Activated CD4-positive, alpha-beta T cell treated with anti-CD3 and anti-CD28 coated beads for 36 hours (primary cell): ENCODE measurements at regions of chr20 and their contacts with region 1.

Region 1: GRCh38 chr20:49384437-49385088 is 97.9 kb downstream of the KCNB1 start:
- DNase-seq: peak; percentile 88
- ATAC-seq: peak; percentile 68
- H3K4me3 Mint-ChIP-seq: no peak overlapping the region
- H3K27ac Mint-ChIP-seq: no peak overlapping the region
- H3K4me1 Mint-ChIP-seq: no peaks in the 10 kb centered on the region
- H3K27me3 Mint-ChIP-seq: peaks cover 22% of the 10 kb centered on the region

Region 2: DNA sequence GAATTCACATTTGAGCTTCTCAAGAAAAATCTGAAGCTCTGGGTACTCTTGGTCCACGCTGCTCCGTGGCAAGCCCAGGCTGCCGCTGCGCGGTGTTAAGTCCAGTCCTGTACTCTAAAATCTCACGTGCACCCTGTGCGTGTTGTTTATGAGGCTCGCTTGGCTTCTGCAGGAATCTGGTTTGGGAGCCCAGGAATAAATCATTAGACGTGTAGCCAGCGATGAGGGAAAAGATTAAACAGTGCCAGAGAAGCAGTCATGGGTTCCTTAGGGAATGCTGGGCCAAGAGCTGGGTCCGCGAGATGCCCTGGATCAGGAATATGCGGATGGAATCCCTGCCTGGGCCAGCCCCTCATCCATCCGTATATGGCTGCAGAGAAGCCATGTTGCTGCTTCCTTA is 10.6 kb after region 1 on chr20:
- CTCF ChIA-PET with region 1: interaction called, 22 read pairs
- POLR2A ChIA-PET with region 1: no interaction called
- intact Hi-C with region 1: no loop called
- DNase-seq: no peak
- ATAC-seq: no peak
- H3K4me3 Mint-ChIP-seq: no peak overlapping the region
- H3K27ac Mint-ChIP-seq: no peak overlapping the region
- H3K4me1 Mint-ChIP-seq: no peaks in the 10 kb centered on the region
- H3K27me3 Mint-ChIP-seq: peaks cover 11% of the 10 kb centered on the region

Region 3: DNA sequence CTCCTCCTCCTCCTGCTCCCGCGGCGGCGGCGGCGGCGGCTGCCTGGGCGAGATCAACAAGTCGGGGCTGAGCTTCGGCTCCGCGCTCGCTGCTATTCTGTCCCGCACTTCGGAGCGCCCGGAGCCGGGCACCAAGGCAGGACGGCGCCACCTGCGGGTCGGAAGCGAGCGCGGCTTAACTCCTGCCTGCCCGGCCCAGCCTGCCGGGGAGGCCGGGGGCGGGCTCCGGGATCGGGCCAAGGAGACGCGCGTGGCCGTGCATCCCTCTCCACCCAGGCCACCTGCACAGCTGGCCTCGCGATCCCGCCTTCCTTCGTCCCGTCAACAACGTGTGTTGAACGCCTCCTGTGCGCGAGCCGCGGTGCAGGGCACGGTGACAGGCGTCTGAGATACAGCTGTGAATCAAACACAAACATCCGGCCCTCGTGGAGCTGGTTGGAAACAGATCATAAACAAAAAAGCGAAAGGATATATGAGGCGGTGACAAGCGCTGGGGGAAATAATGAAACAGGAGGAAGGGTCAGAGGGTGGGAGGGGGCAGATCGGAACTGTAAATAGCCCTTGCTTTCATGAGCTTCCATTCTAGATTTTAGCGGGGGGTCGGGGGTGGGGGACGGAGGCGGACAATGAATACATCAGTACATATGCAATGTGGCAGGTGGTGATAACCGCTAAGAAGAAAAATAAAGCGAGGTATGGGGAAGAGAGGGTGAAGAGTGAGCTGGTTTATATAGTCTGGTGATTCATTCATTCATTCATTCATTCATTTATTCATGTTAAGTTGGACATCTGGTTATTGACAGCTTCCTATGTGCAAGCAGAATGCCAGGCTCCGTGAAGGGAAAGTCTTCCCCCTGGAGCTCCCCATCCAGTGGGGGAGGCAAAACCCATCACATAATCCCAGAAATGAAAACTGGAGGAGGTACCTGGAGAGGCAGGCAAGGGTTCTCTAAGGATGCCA is 99.9 kb after region 1 on chr20:
- CTCF ChIA-PET with region 1: interaction called, 7 read pairs
- POLR2A ChIA-PET with region 1: no interaction called
- intact Hi-C with region 1: loop called (anchors 1 to 5 kb)
- DNase-seq: peak; percentile 87
- ATAC-seq: peak; percentile 95
- H3K4me3 Mint-ChIP-seq: peak overlapping the region; percentile 69
- H3K27ac Mint-ChIP-seq: peak overlapping the region; percentile 14
- H3K4me1 Mint-ChIP-seq: peaks cover 6% of the 10 kb centered on the region
- H3K27me3 Mint-ChIP-seq: peaks cover 53% of the 10 kb centered on the region

Region 4: DNA sequence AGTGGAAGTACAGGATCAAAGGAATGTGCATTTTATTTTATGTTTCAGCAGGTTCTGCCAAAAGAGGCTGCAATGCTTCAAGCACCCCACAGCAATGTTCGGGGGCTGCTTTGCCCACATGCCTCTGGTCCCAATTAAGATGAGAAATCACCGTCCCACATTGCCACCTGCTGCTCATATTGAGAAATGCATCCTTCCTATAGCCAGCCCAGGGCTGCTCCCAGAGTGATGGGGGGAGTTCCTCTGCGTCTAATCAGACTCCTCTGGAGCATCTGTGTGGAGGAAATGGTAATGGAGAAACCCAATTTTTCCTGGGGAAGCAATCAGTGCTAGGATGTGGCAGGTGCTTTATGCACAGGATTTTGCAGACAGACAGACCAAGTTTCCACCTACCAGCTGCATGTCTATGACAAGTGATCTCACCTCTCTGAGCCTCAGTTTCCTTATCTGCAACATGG is 149.7 kb after region 1 on chr20:
- CTCF ChIA-PET with region 1: interaction called, 4 read pairs
- POLR2A ChIA-PET with region 1: no interaction called
- intact Hi-C with region 1: loop called in 1 of 2 experiments (anchors 1 kb)
- DNase-seq: peak; percentile 79
- ATAC-seq: peak; percentile 74
- H3K4me3 Mint-ChIP-seq: no peak overlapping the region
- H3K27ac Mint-ChIP-seq: peak overlapping the region; percentile 65
- H3K4me1 Mint-ChIP-seq: peaks cover 15% of the 10 kb centered on the region
- H3K27me3 Mint-ChIP-seq: peaks cover 12% of the 10 kb centered on the region

Region 5: GRCh38 chr20:49590979-49591865 is 206.7 kb after region 1 on chr20:
- CTCF ChIA-PET with region 1: no interaction called
- POLR2A ChIA-PET with region 1: no interaction called
- intact Hi-C with region 1: no loop called
- DNase-seq: peak; percentile 59
- ATAC-seq: peak; percentile 31
- H3K4me3 Mint-ChIP-seq: peak overlapping the region; percentile 76
- H3K27ac Mint-ChIP-seq: peak overlapping the region; percentile 96
- H3K4me1 Mint-ChIP-seq: peaks cover 69% of the 10 kb centered on the region
- H3K27me3 Mint-ChIP-seq: peaks cover 3% of the 10 kb centered on the region